SK-N-SH (cell line): ENCODE measurements at regions of chr10 and their contacts with region 1.

Region 1: GRCh38 chr10:132023092-132023811 is 41.5 kb upstream of the BNIP3 start:
- DNase-seq: peak; percentile 84
- H3K4me3 ChIP-seq: peak overlapping the region; percentile 24 to 43
- H3K27ac ChIP-seq: no peak overlapping the region
- H3K4me1 ChIP-seq: peaks cover 0 to 9% of the 10 kb centered on the region in 2 experiments; a peak in 1 of 4 replicates
- H3K27me3 ChIP-seq: no peaks in the 10 kb centered on the region; the same call in 1 of the 2 replicates
- CTCF ChIP-seq: peak; percentile 88
- EP300 ChIP-seq: no peak
- RAD21 ChIP-seq: peak; percentile 90

Region 2: DNA sequence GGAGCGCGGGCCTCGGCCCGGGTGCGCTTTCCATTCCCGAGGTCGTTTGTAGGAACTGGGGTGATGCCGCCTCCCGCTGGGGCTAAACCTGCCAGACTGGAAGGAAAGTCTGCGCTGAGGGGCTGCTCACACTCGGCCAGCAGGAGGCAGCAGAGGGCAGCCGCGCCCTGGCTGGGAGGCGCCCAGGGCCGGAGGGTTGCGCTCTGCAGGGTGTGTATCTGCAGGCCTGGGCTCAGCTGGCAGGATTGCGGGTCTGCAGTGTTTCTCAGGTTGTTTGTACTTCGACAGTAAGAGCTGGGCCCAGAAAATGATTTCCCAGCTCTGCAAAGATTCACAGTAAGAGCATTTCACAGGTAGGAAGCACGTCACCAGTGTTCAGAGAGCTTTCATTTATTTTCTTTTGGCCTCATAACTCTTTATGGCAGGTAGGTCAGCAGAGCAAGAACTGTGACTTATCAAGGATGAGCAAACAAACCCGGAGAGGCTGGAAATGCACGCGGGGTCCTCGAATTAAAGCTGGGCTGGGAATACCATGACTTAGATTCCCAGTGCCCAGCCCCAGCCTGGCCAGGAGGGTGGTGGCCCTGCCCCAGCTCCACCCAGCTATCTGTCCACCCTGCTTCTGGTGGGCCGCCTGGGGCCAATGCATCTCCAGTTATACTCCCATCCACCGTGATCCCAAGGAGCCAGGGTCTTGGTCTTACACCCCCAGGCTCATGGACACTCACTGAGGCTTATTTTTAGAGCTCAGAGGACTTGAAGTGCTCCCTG is 137.7 kb before region 1 on chr10:
- CTCF ChIA-PET with region 1: interaction called, 78 read pairs
- POLR2A ChIA-PET with region 1: no interaction called
- DNase-seq: peak; percentile 93
- H3K4me3 ChIP-seq: no peak overlapping the region; a peak in 1 of 4 replicates
- H3K27ac ChIP-seq: no peak overlapping the region
- H3K4me1 ChIP-seq: no peaks in the 10 kb centered on the region; a peak in 1 of 4 replicates
- H3K27me3 ChIP-seq: no peaks in the 10 kb centered on the region
- CTCF ChIP-seq: peak; percentile 81
- EP300 ChIP-seq: no peak
- RAD21 ChIP-seq: peak; percentile 89

Region 3: DNA sequence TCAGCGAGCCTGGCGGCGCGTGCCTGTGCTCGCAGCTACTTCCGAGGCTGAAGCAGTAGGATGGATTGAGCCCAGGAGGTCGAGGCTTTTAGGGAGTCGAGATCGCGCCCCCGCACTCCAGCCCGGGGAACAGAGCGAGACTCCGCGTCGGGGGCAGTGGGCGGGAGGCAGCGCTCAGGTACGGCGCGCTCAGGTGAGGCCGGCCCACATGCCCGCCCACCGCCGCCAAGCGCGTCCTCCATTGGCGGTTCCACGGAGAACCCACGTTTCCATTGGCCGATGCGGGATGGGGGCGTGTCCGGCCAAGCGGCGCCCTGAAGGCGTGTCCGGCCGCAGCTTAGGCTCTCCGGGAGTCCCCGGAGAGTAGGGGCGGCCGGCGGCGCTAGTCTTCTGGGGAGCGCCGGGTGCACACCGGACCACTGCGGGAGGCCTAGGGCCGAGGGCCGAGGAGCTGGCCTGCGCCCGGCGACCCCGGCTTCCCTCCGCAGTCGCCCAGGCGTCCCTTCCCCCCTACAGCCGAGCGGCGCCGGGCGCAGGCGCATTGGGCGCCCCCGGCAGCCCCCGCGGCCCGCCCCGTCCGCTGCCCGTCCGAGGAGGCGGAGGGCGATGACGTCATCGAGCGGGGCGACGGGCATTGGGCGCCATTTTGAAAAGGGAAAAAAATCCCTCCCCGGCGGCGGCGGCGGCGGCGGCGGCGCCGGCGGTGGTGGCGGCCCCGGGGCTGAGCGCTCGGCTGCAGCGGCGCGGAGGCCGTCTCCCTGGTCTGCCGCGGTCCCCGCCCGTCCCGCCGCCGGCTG is 122.7 kb before region 1 on chr10 and contains the start of gene PPP2R2D:
- CTCF ChIA-PET with region 1: interaction called, 22 read pairs
- POLR2A ChIA-PET with region 1: no interaction called
- DNase-seq: peak; percentile 99
- H3K4me3 ChIP-seq: peak within 1 kb of the TSS; percentile 83 to 93
- H3K27ac ChIP-seq: peak within 1 kb of the TSS; percentile 54 to 88
- H3K4me1 ChIP-seq: peaks cover 18 to 20% of the 10 kb centered on the region in 2 experiments; a peak in 3 of 4 replicates
- H3K27me3 ChIP-seq: peaks cover 18% of the 10 kb centered on the region; the same call in 1 of the 2 replicates
- CTCF ChIP-seq: no peak
- EP300 ChIP-seq: no peak
- RAD21 ChIP-seq: no peak
- polyA plus RNA-seq, gene PPP2R2D: 24.3 and 25.1 TPM in 2 replicates

Region 4: DNA sequence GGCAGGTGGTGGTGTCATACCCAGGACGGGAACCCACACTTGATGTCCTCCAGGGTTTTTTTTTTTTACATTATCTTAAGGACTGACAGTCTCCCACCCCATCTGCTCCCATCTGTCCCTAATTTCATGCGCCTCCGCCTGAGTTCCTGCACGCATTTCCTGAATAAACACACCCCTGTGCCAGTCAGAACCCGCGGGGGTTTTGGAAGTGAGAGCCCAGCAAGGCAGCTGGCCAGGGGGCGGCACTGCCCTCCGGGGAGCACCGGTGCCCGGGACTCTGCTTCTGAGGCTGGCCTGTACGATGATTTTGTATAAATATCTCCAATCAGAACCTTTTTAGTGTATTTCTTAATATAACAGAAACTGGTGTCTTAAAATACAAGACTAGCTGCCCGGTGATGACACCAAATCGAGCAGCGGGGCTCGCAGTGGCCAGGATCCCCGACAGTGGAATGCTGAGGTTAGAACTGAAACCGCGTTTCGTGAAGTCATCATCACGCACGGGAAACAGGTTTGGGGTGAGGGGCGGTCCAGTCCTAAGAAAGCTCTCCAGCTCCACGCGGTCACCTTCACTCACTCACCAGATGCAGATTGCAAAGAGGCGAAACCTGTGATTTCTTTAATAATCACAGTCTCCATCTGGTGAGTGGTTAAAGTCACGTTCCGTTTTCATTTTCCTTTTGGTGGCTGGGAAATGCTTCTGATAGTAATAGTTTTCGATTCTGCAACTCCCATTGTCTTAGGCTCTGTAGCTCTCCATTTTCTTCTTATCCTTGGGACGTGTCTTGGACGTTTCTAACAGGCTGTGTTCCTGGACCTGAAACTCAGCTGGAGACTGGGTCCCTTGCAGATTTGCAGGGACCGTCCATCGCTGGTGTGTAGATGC is 61.2 kb before region 1 on chr10:
- CTCF ChIA-PET with region 1: interaction called, 21 read pairs
- POLR2A ChIA-PET with region 1: no interaction called
- DNase-seq: peak; percentile 73
- H3K4me3 ChIP-seq: peak overlapping the region; percentile 56 to 62
- H3K27ac ChIP-seq: peak overlapping the region; percentile 78 to 98
- H3K4me1 ChIP-seq: peaks cover 7 to 27% of the 10 kb centered on the region in 2 experiments; a peak in 2 of 4 replicates
- H3K27me3 ChIP-seq: no peaks in the 10 kb centered on the region
- CTCF ChIP-seq: no peak
- EP300 ChIP-seq: no peak
- RAD21 ChIP-seq: no peak

Region 5: DNA sequence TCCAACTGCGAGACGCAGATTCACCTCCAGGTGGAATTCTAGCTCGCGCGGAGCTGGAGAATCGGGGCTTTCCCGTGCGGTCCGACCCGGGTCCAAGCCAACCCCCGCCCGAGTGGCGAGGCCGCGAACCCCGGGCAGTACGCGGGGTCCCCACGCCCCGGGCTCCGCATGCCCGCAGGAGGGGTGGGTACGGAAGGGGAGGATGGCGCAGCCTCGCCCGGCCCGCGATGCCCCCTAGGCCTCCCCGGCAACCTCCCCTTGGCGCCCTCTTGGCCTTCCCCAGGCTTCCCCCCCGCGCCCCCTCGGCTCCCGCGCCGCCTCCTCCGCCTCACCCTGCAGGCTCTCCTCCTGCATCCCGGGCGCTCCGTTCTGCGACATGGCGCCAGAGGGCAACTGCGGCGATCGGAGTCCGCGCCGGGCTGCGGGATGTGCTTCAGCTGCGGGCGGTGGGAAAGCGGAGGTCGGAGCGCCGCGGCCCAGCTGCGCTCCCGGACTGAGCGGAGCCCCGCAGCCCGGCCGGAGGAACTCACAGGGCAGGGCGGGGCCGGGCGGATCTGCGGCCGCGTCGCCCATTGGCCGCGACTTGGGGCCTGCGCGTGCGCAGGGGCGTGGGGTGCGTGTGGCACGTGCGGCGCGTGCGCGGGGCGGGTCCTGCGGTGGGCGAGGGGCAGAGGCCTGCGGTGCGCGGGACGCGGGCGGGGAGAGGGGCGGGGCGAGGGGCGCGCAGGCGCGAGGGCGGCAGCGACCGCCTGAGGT is 41.6 kb before region 1 on chr10 and contains the start of gene BNIP3:
- CTCF ChIA-PET with region 1: interaction called, 28 read pairs
- POLR2A ChIA-PET with region 1: no interaction called
- DNase-seq: peak; percentile 100
- H3K4me3 ChIP-seq: peak within 1 kb of the TSS; percentile 87 to 91
- H3K27ac ChIP-seq: peak within 1 kb of the TSS; percentile 30 to 82; a peak in 3 of 4 replicates
- H3K4me1 ChIP-seq: peaks cover 10 to 21% of the 10 kb centered on the region in 2 experiments; a peak in 2 of 4 replicates
- H3K27me3 ChIP-seq: no peaks in the 10 kb centered on the region
- CTCF ChIP-seq: peak; percentile 1; the same call in 1 of the 2 replicates
- EP300 ChIP-seq: no peak
- RAD21 ChIP-seq: no peak
- polyA plus RNA-seq, gene BNIP3: 40.3 and 57.2 TPM in 2 replicates

Region 6: GRCh38 chr10:132011024-132011423 is 12.2 kb before region 1 on chr10:
- CTCF ChIA-PET with region 1: interaction called, 72 read pairs
- POLR2A ChIA-PET with region 1: no interaction called
- DNase-seq: no peak
- H3K4me3 ChIP-seq: no peak overlapping the region
- H3K27ac ChIP-seq: no peak overlapping the region
- H3K4me1 ChIP-seq: no peaks in the 10 kb centered on the region
- H3K27me3 ChIP-seq: no peaks in the 10 kb centered on the region; the same call in 1 of the 2 replicates
- CTCF ChIP-seq: no peak
- EP300 ChIP-seq: no peak
- RAD21 ChIP-seq: no peak

Region 7: DNA sequence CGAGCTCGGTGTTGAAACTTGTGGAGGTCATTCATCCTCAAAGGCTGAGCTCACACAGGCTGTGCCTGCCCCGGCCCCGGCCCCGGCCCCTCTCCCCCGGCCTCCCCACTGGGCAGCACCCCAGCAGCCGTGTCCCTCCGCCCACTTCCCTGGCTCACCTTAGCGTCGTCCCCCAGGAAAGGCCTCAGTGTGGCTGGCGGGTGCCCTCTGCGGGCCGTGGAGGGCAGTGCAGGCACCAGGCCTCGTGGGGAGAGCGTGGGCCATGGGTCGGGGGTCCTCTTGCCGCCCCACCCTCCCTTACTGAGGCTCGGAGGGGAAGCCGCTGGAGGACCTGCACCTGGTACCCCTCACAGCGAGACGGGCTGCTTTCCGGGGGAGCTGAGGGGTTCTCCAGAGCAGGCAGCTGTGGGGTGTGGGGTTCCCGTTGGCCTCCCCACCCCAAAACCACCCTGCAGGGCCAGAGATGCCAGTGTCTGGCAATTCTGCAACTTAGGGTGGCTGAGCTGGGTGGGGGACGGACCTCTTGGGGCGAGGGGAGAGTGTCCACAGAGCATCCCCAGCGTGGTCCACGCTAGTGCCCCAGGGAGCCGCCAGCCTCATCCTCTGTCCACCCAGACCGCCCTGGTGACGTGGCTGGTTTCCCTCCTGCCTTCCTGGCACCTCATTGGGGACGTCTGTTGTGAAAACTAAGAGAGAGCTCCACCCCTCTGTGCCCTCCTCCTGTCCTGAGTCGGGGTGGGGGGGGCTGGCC is 119.3 kb after region 1 on chr10:
- CTCF ChIA-PET with region 1: interaction called, 19 read pairs
- POLR2A ChIA-PET with region 1: no interaction called
- DNase-seq: peak; percentile 95
- H3K4me3 ChIP-seq: no peak overlapping the region
- H3K27ac ChIP-seq: no peak overlapping the region
- H3K4me1 ChIP-seq: no peaks in the 10 kb centered on the region; a peak in 1 of 4 replicates
- H3K27me3 ChIP-seq: no peaks in the 10 kb centered on the region
- CTCF ChIP-seq: peak; percentile 45
- EP300 ChIP-seq: no peak
- RAD21 ChIP-seq: peak; percentile 74

Region 8: GRCh38 chr10:132209130-132209529 is 185.9 kb after region 1 on chr10:
- CTCF ChIA-PET with region 1: no interaction called
- POLR2A ChIA-PET with region 1: no interaction called
- DNase-seq: no peak
- H3K4me3 ChIP-seq: no peak overlapping the region
- H3K27ac ChIP-seq: no peak overlapping the region
- H3K4me1 ChIP-seq: no peaks in the 10 kb centered on the region; a peak in 1 of 4 replicates
- H3K27me3 ChIP-seq: no peaks in the 10 kb centered on the region
- CTCF ChIP-seq: no peak
- EP300 ChIP-seq: no peak
- RAD21 ChIP-seq: no peak

Region 9: DNA sequence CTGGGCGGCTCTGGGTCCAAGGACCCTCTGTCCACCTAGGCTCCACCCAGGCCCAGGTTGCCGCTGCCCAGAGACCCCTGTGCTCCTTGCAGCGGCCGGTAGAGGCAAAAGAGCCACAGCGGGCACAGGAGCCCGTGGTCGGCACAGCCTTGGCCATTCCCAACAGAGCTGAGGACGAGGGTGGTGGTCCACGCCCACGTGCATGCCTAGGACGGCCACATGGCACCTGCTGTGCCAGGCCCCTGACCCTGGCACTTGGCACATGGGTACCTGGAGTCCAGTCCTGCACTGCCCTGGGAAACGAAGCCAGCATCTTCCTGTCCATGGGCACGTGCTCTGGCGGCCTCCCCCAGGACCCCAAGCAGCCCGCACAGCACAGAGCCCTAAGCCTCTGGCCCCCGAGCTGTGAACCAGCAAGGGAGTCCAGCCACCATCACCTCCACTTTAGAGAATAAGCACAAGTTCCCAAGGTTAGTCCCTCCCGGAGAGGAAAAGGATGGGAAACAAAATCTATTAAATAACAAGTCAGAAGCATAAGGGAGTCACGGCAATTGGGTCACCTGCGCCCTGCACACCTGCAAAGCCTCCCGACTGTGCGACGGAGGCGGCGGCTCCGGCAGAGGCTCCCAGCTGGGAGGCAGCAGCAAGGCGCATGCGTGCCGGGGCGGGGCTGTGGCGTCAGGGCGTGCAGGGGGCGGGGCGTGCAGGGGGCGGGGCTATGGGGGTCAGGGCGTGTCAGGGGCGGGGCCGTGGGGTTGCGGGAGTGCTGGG is 225.4 kb after region 1 on chr10:
- CTCF ChIA-PET with region 1: no interaction called
- POLR2A ChIA-PET with region 1: no interaction called
- DNase-seq: peak; percentile 95
- H3K4me3 ChIP-seq: peak overlapping the region; percentile 53
- H3K27ac ChIP-seq: peak overlapping the region in 1 of 2 experiments; percentile 39; a peak in 1 of 4 replicates
- H3K4me1 ChIP-seq: peaks cover 0 to 21% of the 10 kb centered on the region in 2 experiments; a peak in 1 of 4 replicates
- H3K27me3 ChIP-seq: no peaks in the 10 kb centered on the region
- CTCF ChIP-seq: no peak
- EP300 ChIP-seq: no peak
- RAD21 ChIP-seq: no peak

Region 10: DNA sequence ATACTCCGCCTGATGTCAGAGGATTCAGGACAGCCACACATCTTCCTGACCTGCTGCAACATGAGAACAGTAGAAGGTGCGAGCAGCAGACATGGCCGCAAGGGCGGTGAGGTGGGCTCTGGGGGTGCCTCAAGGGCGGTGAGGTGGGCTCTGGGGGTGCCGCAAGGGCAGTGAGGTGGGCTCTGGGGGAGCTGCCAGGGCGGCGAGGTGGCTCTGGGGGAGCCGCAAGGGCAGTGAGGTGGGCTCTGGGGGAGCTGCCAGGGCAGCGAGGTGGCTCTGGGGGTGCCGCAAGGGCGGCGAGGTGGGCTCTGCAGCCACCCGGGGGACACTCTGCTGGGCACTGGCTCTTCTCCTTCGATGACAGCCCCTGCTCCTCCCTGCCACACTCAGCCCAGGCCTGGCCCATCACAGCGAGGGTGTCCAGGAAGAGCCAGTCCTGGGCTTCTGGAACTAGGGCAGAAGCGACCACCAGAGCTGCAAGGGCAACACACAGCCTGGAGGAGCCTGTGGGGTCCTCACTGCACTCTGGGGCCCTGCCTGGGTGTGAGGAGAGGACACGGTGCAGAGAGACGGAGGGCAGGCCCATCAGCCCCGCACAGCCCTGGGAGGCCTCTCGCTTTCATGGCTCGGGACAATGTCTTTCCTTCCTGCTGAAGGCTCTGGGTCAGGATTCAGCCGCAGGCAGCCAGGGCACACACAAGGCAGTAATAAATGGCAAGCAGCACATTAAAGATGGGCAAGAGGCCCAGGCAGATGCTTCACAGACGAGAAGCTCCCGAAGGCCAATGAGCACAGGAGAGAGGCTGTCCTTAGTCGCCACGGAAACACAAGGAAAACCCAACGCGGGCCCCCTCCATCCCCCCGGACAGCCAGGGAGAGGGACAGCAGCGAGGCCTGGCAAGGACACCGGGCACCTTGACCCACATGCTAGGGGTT is 242.0 kb after region 1 on chr10:
- CTCF ChIA-PET with region 1: no interaction called
- POLR2A ChIA-PET with region 1: no interaction called
- DNase-seq: peak; percentile 87
- H3K4me3 ChIP-seq: no peak overlapping the region
- H3K27ac ChIP-seq: peak overlapping the region in 1 of 2 experiments; percentile 88; a peak in 2 of 4 replicates
- H3K4me1 ChIP-seq: peaks cover 0 to 52% of the 10 kb centered on the region in 2 experiments; a peak in 1 of 4 replicates
- H3K27me3 ChIP-seq: no peaks in the 10 kb centered on the region
- CTCF ChIP-seq: no peak
- EP300 ChIP-seq: 0 out of 4 replicates have a peak, but pooled peaks of 1 of the 2 experiments have one; percentile 54
- RAD21 ChIP-seq: no peak